ENCODE measurements at regions of chr11 and their contacts with region 1.

Region 1: GRCh38 chr11:72430741-72431570 is 3.4 kb downstream of the CLPB start:
- DNase-seq: peak; percentile 52
- H3K4me3 ChIP-seq: no peak overlapping the region
- H3K27ac ChIP-seq: no peak overlapping the region
- H3K4me1 ChIP-seq: peaks cover 4% of the 10 kb centered on the region
- H3K27me3 ChIP-seq: no peaks in the 10 kb centered on the region
- CTCF ChIP-seq: peak; percentile 57 to 79
- POLR2A ChIP-seq: no peak

Region 2: GRCh38 chr11:71977743-71978418 is 453.1 kb before region 1 on chr11:
- CTCF ChIA-PET with region 1: interaction called, 37 read pairs
- POLR2A ChIA-PET with region 1: no interaction called
- dilution Hi-C with region 1: no loop called
- intact Hi-C with region 1: loop called (anchors 2 kb)
- DNase-seq: peak; percentile 67
- H3K4me3 ChIP-seq: no peak overlapping the region
- H3K27ac ChIP-seq: no peak overlapping the region
- H3K4me1 ChIP-seq: no peaks in the 10 kb centered on the region
- H3K27me3 ChIP-seq: no peaks in the 10 kb centered on the region
- CTCF ChIP-seq: peak; percentile 54 to 57
- POLR2A ChIP-seq: no peak

Region 3: GRCh38 chr11:72141066-72141465 is 289.9 kb before region 1 on chr11:
- CTCF ChIA-PET with region 1: interaction called, 34 read pairs
- POLR2A ChIA-PET with region 1: no interaction called
- dilution Hi-C with region 1: no loop called
- intact Hi-C with region 1: no loop called
- DNase-seq: no peak
- H3K4me3 ChIP-seq: no peak overlapping the region
- H3K27ac ChIP-seq: no peak overlapping the region
- H3K4me1 ChIP-seq: no peaks in the 10 kb centered on the region
- H3K27me3 ChIP-seq: peaks cover 7 to 10% of the 10 kb centered on the region in 2 experiments
- CTCF ChIP-seq: no peak
- POLR2A ChIP-seq: no peak

Region 4: GRCh38 chr11:72238040-72238450 is 192.9 kb before region 1 on chr11:
- CTCF ChIA-PET with region 1: interaction called, 38 read pairs
- POLR2A ChIA-PET with region 1: no interaction called
- dilution Hi-C with region 1: no loop called
- intact Hi-C with region 1: loop called (anchors 2 kb)
- DNase-seq: peak; percentile 51
- H3K4me3 ChIP-seq: no peak overlapping the region
- H3K27ac ChIP-seq: no peak overlapping the region
- H3K4me1 ChIP-seq: peaks cover 12% of the 10 kb centered on the region
- H3K27me3 ChIP-seq: peaks cover 28 to 37% of the 10 kb centered on the region in 2 experiments
- CTCF ChIP-seq: peak; percentile 77 to 85
- POLR2A ChIP-seq: peak; percentile 45

Region 5: GRCh38 chr11:72353861-72354260 is 77.1 kb before region 1 on chr11:
- CTCF ChIA-PET with region 1: interaction called, 11 read pairs
- POLR2A ChIA-PET with region 1: no interaction called
- dilution Hi-C with region 1: no loop called
- intact Hi-C with region 1: no loop called
- DNase-seq: no peak
- H3K4me3 ChIP-seq: no peak overlapping the region
- H3K27ac ChIP-seq: no peak overlapping the region
- H3K4me1 ChIP-seq: no peaks in the 10 kb centered on the region
- H3K27me3 ChIP-seq: no peaks in the 10 kb centered on the region
- CTCF ChIP-seq: no peak
- POLR2A ChIP-seq: no peak

Region 6: DNA sequence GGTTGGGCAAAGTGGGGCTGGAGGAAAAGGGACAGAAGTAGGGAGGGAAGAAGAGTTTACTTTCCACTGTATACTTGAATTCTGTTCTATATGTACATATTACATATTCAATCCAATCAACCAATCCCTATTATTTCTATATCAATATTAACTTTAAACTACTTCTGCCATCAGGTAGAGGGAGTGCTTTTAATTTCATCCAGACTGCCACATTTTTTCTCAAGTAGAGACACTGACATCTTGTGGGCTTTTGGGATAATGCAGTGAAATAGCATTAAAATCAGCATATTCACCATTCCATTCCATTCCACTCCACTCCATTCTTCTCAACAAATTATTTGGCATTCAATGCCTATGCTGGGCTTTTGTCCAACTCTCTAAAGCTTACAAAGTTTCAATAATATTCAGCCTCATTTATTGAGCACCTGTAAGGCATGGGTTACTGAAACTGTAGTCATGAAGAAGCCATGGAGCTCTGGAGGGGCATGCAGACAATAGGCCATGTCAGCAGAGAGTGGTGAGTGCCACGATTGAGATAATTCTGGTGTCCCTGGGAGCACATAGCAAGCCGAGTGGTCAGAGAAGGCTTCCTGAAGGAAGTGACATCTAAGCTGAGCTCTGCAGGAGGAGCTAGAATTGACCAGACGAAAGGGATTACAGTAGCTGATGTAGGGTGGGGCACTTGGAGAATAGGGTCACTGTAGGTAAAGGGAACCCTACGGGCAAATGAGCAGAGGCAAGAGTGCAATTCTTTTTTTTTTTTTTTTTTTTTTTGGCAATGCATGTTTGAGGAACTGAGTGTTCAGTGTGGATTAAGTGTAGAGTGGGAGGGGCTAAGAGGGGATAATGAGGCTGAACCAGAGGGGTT is 16.2 kb after region 1 on chr11:
- CTCF ChIA-PET with region 1: interaction called, 30 read pairs
- POLR2A ChIA-PET with region 1: no interaction called
- dilution Hi-C with region 1: no loop called
- intact Hi-C with region 1: no loop called
- DNase-seq: peak; percentile 70
- H3K4me3 ChIP-seq: no peak overlapping the region
- H3K27ac ChIP-seq: no peak overlapping the region
- H3K4me1 ChIP-seq: no peaks in the 10 kb centered on the region
- H3K27me3 ChIP-seq: peaks cover 7 to 9% of the 10 kb centered on the region in 2 experiments
- CTCF ChIP-seq: peak; percentile 38 to 58
- POLR2A ChIP-seq: no peak

Region 7: DNA sequence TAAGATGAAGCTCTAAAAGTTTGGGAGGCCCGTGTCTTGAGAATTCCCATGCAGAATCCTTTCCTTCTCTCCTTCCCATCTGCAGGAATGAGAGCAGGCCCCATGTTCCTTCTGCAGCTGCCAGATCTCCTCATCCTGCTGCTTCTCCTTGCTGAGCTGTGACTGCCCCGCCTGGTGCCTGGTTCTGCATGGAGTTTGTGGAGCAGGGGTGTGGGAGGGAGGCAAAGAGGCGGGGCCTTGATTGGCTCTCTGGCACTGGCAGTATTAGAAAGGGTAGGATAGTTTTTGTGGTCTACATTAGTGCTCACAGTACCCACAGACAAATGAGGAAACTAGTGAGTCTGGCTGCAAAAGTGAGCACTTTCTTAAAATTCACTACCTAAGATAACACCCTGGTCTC is 94.5 kb after region 1 on chr11:
- CTCF ChIA-PET with region 1: no interaction called
- POLR2A ChIA-PET with region 1: no interaction called
- dilution Hi-C with region 1: no loop called
- intact Hi-C with region 1: no loop called
- DNase-seq: no peak
- H3K4me3 ChIP-seq: no peak overlapping the region
- H3K27ac ChIP-seq: no peak overlapping the region
- H3K4me1 ChIP-seq: no peaks in the 10 kb centered on the region
- H3K27me3 ChIP-seq: peaks cover 9 to 17% of the 10 kb centered on the region in 2 experiments
- CTCF ChIP-seq: no peak
- POLR2A ChIP-seq: no peak

Measured in endothelial cell of umbilical vein (primary cell).